ENCODE measurements at regions of chr2 and their contacts with region 1.

Region 1: DNA sequence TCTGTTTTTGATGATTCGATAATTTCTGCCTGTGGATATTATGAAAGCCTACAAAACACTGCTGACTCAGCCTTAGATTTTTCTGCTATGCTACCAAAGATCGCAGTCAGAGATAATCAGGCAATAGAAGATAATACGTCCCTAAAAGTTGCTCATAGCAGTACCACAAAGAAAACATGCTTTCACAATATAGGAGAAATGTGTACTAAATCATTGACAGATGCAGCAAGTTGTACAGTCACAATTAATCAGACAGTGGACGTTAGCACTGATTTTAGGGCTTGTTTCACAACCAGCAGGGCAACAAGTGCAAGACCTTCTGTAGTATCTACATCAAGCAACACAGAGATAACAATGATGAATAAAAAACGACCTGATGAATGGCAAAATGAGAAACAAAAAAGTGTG is 19.5 kb downstream of the RBM44 start:
- DNase-seq: no peak
- H3K4me3 Mint-ChIP-seq: no peak overlapping the region
- H3K27ac Mint-ChIP-seq: no peak overlapping the region
- H3K4me1 Mint-ChIP-seq: peaks cover 33% of the 10 kb centered on the region
- H3K27me3 Mint-ChIP-seq: no peaks in the 10 kb centered on the region

Region 2: GRCh38 chr2:237998530-237998929 is 180.5 kb after region 1 on chr2:
- CTCF ChIA-PET with region 1: no interaction called
- POLR2A ChIA-PET with region 1: interaction called, 4 read pairs
- intact Hi-C with region 1: loop called (anchors 5 kb)
- DNase-seq: peak; percentile 65
- H3K4me3 Mint-ChIP-seq: peak overlapping the region; percentile 62
- H3K27ac Mint-ChIP-seq: peak overlapping the region; percentile 93
- H3K4me1 Mint-ChIP-seq: peaks cover 57% of the 10 kb centered on the region
- H3K27me3 Mint-ChIP-seq: no peaks in the 10 kb centered on the region